Activated CD4-positive, alpha-beta T cell treated with anti-CD3 and anti-CD28 coated beads for 36 hours (primary cell): ENCODE measurements at regions of chr10 and their contacts with region 1.

Region 1: DNA sequence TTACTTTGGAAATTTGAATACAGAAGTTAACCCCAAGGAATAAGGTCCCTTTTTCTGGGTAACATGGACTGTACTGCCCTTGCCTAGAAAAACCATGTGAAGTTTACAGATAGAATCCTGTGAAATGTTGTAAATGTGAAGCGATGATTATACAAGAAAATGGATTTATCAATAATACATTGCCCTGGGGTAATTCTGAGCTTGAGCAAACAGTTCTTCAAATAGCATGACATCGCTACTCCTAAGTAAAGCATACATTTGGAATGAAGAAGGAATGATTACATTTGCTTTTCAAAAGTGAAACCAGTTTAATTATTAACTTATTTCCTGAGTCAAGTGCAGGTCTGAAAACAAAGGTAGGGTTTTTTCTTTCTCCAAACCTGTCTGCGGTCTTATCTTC is 43.3 kb upstream of the FZD8 start:
- DNase-seq: no peak
- ATAC-seq: no peak
- H3K4me3 Mint-ChIP-seq: no peak overlapping the region
- H3K27ac Mint-ChIP-seq: no peak overlapping the region
- H3K4me1 Mint-ChIP-seq: no peaks in the 10 kb centered on the region
- H3K27me3 Mint-ChIP-seq: peaks cover 6% of the 10 kb centered on the region

Region 2: DNA sequence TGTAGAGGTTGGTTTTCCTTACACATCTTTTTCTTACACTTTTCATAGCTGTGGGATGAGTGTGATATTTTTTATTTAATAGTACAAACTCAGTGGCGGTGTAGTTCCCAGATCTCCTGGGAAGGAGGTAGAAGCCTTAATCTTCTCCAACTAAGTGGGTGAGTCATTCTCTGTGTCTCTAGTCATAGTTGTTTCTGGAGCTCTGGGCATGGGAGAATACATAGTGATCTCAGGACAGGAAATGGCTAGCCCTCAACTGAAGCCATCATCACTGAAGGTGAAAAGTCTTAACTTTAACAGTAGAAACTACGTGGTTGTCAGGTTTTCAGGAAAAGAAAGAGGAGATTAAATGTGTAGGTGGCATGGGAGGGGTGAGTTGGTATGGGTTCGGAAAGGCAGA is 276.1 kb after region 1 on chr10:
- CTCF ChIA-PET with region 1: no interaction called
- POLR2A ChIA-PET with region 1: no interaction called
- intact Hi-C with region 1: no loop called
- DNase-seq: no peak
- ATAC-seq: no peak
- H3K4me3 Mint-ChIP-seq: no peak overlapping the region
- H3K27ac Mint-ChIP-seq: no peak overlapping the region
- H3K4me1 Mint-ChIP-seq: no peaks in the 10 kb centered on the region
- H3K27me3 Mint-ChIP-seq: no peaks in the 10 kb centered on the region

Region 3: DNA sequence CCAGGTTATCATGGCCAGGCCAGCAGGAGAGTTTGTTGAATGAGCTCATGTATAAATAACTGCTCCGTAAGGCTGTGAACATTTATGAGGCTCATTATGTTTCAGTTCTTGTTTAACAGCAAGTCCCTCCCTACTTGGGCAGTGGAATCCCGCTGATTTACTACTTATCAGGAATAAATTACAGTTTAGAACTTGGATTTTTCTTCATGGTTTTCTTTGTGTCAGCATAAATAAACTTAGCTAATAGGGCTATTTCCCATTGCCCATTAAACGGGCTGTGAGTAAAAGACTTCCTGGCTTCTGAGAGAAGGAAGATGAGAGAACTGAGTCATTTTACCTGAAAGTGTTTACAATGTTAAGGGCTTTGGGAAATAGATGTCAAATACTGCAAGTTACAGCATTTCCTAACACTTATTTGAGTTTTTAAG is 738.4 kb after region 1 on chr10:
- CTCF ChIA-PET with region 1: no interaction called
- POLR2A ChIA-PET with region 1: no interaction called
- intact Hi-C with region 1: loop called in 1 of 2 experiments (anchors 5 kb)
- DNase-seq: no peak
- ATAC-seq: no peak
- H3K4me3 Mint-ChIP-seq: no peak overlapping the region
- H3K27ac Mint-ChIP-seq: no peak overlapping the region
- H3K4me1 Mint-ChIP-seq: no peaks in the 10 kb centered on the region
- H3K27me3 Mint-ChIP-seq: no peaks in the 10 kb centered on the region